Activated T-helper 2 cell treated with anti-CD3 and anti-CD28 coated beads, Interferon-gamma antibody, Interleukin-2, Interleukin-4, amounts not matched to agents 10 μg/mL and 5 μg/mL and 100 μg/mL, durations not matched to agents 14 hours and 24 hours and 36 hours (primary cell): ENCODE measurements at regions of chr15 and their contacts with region 1.

Region 1: GRCh38 chr15:51270706-51271105 is 67.7 kb downstream of the CYP19A1 start:
- DNase-seq: no peak
- H3K4me3 Mint-ChIP-seq: no peak overlapping the region
- H3K27ac Mint-ChIP-seq: no peak overlapping the region
- H3K4me1 Mint-ChIP-seq: peaks cover 13% of the 10 kb centered on the region
- H3K27me3 Mint-ChIP-seq: peaks cover 20% of the 10 kb centered on the region

Region 2: DNA sequence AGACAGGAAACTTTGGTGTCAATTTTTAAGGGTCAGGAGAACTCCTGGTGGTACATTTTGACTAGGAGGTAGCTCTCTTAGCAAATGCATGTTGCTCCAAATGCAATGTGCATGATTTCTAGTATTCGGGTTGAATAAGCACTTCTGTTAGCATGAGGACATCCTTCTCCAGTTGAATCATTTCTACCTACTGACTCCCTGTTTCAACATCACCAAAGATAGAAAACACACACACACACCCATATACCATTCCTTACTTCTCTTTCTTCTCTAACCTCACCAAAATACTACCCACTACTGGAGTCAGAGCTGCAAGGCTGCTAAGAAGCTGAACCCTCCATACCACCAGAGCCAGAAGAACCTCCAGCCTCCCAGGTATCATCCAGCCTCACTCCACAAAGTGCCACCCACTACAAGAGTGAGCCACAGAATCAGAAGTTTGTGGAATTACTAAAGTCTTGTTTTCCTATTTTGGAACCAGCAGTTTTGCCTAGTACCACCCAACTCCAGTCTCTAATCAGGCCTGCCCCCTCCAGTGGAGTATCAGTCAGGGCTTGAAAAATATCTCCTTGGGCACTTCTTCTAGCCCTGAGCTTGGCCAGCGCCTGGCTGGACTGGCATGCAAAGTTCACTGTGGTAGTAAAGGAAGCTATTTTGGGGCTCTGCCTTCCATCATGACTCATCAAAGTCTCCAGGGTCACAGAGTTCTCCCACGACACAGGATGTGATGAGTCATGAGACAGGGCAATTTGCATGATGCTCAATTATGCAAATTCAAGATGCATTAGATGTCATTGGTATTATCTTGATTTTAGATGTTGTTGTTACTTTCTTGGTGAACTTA is 42.5 kb before region 1 on chr15:
- intact Hi-C with region 1: loop called (anchors 5 kb)
- DNase-seq: peak; percentile 33
- H3K4me3 Mint-ChIP-seq: no peak overlapping the region
- H3K27ac Mint-ChIP-seq: peak overlapping the region; percentile 68
- H3K4me1 Mint-ChIP-seq: peaks cover 47% of the 10 kb centered on the region
- H3K27me3 Mint-ChIP-seq: no peaks in the 10 kb centered on the region

Region 3: GRCh38 chr15:51332206-51333124 is 61.8 kb after region 1 on chr15:
- intact Hi-C with region 1: no loop called
- DNase-seq: no peak
- H3K4me3 Mint-ChIP-seq: no peak overlapping the region
- H3K27ac Mint-ChIP-seq: no peak overlapping the region
- H3K4me1 Mint-ChIP-seq: no peaks in the 10 kb centered on the region
- H3K27me3 Mint-ChIP-seq: peaks cover 1% of the 10 kb centered on the region